ENCODE measurements at regions of chr22 and their contacts with region 1.

Region 1: GRCh38 chr22:29635734-29636357 is 32.4 kb downstream of the NF2 start:
- DNase-seq: no peak
- H3K4me3 ChIP-seq: no peak overlapping the region
- CTCF ChIP-seq: peak; percentile 66

Region 2: DNA sequence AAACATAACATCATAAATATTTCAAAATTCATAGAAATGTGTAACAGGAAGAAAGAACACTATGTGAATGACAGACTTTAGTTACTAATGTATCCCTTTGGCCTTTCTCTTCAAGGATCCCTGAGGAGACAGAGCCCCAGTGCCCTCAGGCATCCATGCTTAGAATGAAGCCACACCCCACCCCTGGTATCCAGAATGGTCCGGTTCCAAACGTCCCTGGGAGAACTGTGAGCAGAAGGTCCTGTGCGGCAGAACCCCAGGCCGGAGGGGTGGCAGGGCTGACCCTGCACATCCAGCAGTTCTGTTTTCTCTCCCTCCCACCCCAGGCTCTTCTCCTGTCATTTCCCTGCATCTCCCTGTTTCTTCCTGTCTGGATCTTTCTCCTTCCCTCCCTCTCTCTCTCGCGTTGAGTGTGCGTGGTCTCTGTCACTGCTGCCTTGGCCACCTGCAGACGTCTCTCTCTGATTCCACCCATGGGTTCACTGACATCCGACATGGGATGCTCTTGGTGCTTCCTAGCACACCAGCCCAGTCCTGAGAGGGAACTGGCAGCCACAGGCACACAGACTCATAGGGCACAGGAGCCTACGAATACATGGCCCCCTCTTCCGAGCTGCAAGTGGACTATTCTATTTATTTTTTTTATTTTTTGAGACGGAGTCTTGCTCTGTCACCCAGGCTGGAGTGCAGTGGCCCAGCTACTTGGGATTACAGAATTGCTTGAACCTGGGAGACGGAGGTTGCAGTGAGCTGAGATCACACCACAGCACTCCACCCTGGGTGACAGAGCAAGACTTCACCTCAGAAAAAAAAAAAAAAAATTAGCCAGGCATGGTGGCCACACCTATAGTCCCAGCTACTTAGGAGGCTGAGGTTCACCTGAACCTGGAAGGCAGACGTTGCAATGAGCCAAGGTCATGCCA is 191.7 kb before region 1 on chr22:
- CTCF ChIA-PET with region 1: no interaction called
- POLR2A ChIA-PET with region 1: no interaction called
- DNase-seq: no peak
- H3K4me3 ChIP-seq: no peak overlapping the region
- CTCF ChIP-seq: no peak

Region 3: GRCh38 chr22:29603358-29604075 is 32.3 kb before region 1 on chr22 and contains the start of gene NF2:
- CTCF ChIA-PET with region 1: interaction called, 10 read pairs
- POLR2A ChIA-PET with region 1: no interaction called
- DNase-seq: peak; percentile 95
- H3K4me3 ChIP-seq: peak within 1 kb of the TSS; percentile 76
- CTCF ChIP-seq: no peak

Region 4: GRCh38 chr22:29625090-29625825 is 10.6 kb before region 1 on chr22:
- CTCF ChIA-PET with region 1: interaction called, 70 read pairs
- POLR2A ChIA-PET with region 1: no interaction called
- DNase-seq: no peak
- H3K4me3 ChIP-seq: no peak overlapping the region
- CTCF ChIP-seq: peak; percentile 63

Region 5: GRCh38 chr22:29647954-29648737 is 12.3 kb after region 1 on chr22:
- CTCF ChIA-PET with region 1: interaction called, 23 read pairs
- POLR2A ChIA-PET with region 1: no interaction called
- DNase-seq: no peak
- H3K4me3 ChIP-seq: no peak overlapping the region
- CTCF ChIP-seq: no peak

Region 6: DNA sequence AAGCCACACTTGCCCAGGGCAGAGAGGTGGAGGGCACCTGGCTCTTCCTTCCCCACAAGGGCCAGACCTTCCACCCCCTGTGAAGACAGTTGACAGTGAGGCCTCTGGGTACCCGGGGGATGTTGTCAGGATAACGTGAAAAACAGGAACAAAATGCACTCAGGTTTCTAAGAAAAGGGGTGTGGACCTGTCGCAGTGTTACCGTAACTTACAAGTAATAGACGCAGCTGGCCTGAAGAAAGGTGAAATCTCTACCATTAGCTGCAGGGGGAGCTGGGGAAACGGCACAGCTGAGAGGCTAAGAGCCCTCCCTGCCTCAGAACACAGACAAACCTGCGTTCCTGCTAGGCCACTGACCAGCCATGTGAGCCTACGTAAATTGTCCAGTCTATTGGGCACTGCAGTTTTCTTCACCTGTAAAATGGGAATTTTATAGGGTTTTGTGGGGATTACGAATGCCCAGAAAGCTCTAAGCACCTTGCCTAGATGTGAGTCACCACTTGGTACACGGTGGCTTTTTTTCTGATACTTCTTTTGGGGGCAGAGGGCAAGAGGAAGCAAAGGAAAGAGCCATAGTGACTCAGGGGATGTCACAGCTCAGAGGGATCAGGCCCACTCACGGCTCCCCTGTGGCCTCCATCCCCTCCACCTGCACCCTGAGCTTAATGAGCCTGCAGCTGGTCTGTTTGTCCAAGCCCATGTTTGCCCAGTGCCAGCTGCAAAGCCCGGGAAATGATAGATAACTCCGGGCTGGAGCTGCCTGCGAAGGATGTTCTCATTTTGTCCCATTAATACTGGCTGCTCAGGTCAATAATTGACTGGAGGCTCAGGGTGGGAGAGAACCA is 65.5 kb after region 1 on chr22:
- CTCF ChIA-PET with region 1: interaction called, 10 read pairs
- POLR2A ChIA-PET with region 1: no interaction called
- DNase-seq: no peak
- H3K4me3 ChIP-seq: no peak overlapping the region
- CTCF ChIP-seq: peak; percentile 14